Caco-2 (cell line): ENCODE measurements at regions of chr14 and their contacts with region 1.

Region 1: GRCh38 chr14:22151121-22151520 is 437.9 kb downstream of the DAD1 start:
- DNase-seq: no peak
- H3K4me3 ChIP-seq: no peak overlapping the region
- H3K4me3 Mint-ChIP-seq: no peak overlapping the region
- H3K27ac Mint-ChIP-seq: no peak overlapping the region
- H3K4me1 ChIP-seq: peaks cover 8% of the 10 kb centered on the region
- H3K4me1 Mint-ChIP-seq: peaks cover 6% of the 10 kb centered on the region
- H3K27me3 ChIP-seq: no peaks in the 10 kb centered on the region
- H3K27me3 Mint-ChIP-seq: peaks cover 3% of the 10 kb centered on the region
- CTCF ChIP-seq: no peak

Region 2: DNA sequence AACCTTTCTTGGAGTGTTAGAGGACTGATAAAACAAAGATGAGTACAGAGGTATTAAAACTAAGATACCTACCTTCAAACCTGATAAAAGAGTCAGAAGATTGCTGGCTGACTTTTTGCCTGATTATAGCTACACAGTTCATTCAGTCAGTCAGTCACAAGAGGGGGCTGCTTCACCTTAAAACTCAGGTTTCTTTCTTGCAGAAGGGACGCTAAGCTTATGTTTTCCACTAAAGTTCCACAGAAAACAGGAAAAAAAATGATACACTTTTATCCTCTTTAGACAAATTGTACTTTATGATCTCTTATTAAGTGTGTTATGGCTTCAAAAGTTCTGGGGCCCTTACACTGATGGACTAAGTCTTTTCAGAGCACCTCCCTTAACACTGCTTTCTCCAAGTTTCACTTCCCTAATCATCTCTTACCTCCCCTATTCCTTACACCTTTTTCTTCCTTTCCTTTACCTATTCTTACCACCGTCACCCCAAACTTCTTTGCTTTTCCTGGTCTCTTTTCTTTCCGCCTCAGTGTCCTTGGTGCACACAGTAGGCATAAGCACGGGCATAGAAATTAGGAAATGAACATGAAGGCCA is 28.8 kb before region 1 on chr14:
- CTCF ChIA-PET with region 1: no interaction called
- POLR2A ChIA-PET with region 1: no interaction called
- intact Hi-C with region 1: loop called (anchors 1 kb)
- DNase-seq: peak; percentile 27 to 37
- H3K4me3 ChIP-seq: no peak overlapping the region
- H3K4me3 Mint-ChIP-seq: no peak overlapping the region
- H3K27ac Mint-ChIP-seq: no peak overlapping the region
- H3K4me1 ChIP-seq: no peaks in the 10 kb centered on the region
- H3K4me1 Mint-ChIP-seq: peaks cover 7% of the 10 kb centered on the region
- H3K27me3 ChIP-seq: no peaks in the 10 kb centered on the region
- H3K27me3 Mint-ChIP-seq: peaks cover 14% of the 10 kb centered on the region
- CTCF ChIP-seq: peak; percentile 27 to 54